ENCODE measurements at regions of chr2 and their contacts with region 1.

Region 1: GRCh38 chr2:88669371-88670214 is 21.9 kb upstream of the RPIA start:
- DNase-seq: no peak
- ATAC-seq: peak; percentile 61 to 73

Region 2: GRCh38 chr2:88530081-88530480 is 139.5 kb before region 1 on chr2:
- intact Hi-C with region 1: no loop called
- DNase-seq: no peak
- ATAC-seq: no peak

Region 3: GRCh38 chr2:88590998-88591613 is 78.5 kb before region 1 on chr2:
- intact Hi-C with region 1: loop called (anchors 1 to 5 kb)
- DNase-seq: no peak
- ATAC-seq: peak; percentile 74 to 76